GM10248 (cell line): ENCODE measurements at regions of chr4 and their contacts with region 1.

Region 1: DNA sequence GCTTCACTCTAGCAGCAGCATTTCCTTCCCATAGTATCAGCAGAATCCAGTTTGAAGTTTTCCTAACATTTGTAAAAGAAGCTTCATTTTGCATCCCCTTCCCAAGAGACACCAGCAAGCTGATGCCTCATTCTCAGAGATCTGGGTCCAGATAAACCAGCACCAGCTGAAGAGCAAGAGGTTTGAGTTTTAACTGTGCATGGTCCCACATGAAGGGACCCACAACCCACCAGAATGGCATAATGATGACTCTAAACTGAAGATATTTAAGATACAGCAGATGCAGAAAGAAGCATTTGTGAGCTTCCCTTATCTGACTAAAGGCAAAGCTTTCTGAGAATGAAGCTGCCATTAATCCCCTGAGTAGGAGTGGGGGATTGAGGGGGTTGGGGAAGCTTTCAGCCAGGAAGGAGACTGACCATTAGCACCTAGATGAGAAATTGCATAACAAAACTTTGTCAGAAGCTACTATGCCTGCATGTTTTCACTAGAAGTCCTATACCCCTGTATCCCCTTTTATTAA is 18.6 kb downstream of the NUDT6 start:
- DNase-seq: no peak
- CTCF ChIP-seq: no peak

Region 2: GRCh38 chr4:122914292-122914904 is 10.6 kb after region 1 on chr4:
- CTCF ChIA-PET with region 1: interaction called, 14 read pairs
- POLR2A ChIA-PET with region 1: no interaction called
- DNase-seq: peak; percentile 20
- CTCF ChIP-seq: peak; percentile 38